ENCODE measurements at regions of chr17 and their contacts with region 1.

Region 1: GRCh38 chr17:10631048-10631700 is 25.9 kb downstream of the MYH3 start:
- DNase-seq: no peak
- H3K4me3 ChIP-seq: no peak overlapping the region
- CTCF ChIP-seq: peak; percentile 82

Region 2: GRCh38 chr17:10295728-10296343 is 335.3 kb before region 1 on chr17:
- CTCF ChIA-PET with region 1: interaction called, 14 read pairs
- POLR2A ChIA-PET with region 1: no interaction called
- DNase-seq: no peak
- H3K4me3 ChIP-seq: no peak overlapping the region
- CTCF ChIP-seq: peak; percentile 74

Region 3: GRCh38 chr17:10439816-10440215 is 191.4 kb before region 1 on chr17:
- CTCF ChIA-PET with region 1: no interaction called
- POLR2A ChIA-PET with region 1: no interaction called
- DNase-seq: no peak
- H3K4me3 ChIP-seq: no peak overlapping the region
- CTCF ChIP-seq: no peak

Region 4: GRCh38 chr17:10683853-10684252 is 52.7 kb after region 1 on chr17:
- CTCF ChIA-PET with region 1: interaction called, 20 read pairs
- POLR2A ChIA-PET with region 1: no interaction called
- DNase-seq: no peak
- H3K4me3 ChIP-seq: no peak overlapping the region
- CTCF ChIP-seq: peak; percentile 27

Region 5: GRCh38 chr17:10697092-10698081 is 66.2 kb after region 1 on chr17 and contains the starts of genes ADPRM and SCO1:
- CTCF ChIA-PET with region 1: interaction called, 15 read pairs
- POLR2A ChIA-PET with region 1: no interaction called
- DNase-seq: peak; percentile 60
- H3K4me3 ChIP-seq: peak within 1 kb of the TSS; percentile 97
- CTCF ChIP-seq: peak; percentile 72

Region 6: DNA sequence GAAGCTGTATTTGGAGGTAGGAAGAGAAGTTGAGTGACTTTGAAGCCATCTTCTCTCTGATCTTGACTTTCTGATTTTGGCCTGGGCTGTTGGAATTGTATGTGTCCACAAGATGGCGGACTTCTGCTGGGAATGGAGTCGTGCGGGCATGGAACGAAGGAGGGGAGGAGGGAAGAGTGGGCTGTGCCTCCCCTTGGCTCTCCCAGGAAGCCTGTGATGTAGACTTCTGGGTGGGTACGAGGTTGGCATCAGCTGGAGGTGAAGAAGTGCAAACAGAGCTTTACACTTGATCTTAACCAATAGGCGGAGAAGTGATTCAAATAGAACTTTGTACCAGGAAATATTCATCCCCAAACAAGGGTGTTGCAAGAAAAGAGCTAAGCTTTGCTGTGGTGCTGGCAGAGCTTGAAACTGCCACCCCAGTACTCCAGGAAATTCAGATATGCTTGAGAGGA is 106.0 kb after region 1 on chr17:
- CTCF ChIA-PET with region 1: interaction called, 18 read pairs
- POLR2A ChIA-PET with region 1: no interaction called
- DNase-seq: no peak
- H3K4me3 ChIP-seq: no peak overlapping the region
- CTCF ChIP-seq: peak; percentile 77

Region 7: DNA sequence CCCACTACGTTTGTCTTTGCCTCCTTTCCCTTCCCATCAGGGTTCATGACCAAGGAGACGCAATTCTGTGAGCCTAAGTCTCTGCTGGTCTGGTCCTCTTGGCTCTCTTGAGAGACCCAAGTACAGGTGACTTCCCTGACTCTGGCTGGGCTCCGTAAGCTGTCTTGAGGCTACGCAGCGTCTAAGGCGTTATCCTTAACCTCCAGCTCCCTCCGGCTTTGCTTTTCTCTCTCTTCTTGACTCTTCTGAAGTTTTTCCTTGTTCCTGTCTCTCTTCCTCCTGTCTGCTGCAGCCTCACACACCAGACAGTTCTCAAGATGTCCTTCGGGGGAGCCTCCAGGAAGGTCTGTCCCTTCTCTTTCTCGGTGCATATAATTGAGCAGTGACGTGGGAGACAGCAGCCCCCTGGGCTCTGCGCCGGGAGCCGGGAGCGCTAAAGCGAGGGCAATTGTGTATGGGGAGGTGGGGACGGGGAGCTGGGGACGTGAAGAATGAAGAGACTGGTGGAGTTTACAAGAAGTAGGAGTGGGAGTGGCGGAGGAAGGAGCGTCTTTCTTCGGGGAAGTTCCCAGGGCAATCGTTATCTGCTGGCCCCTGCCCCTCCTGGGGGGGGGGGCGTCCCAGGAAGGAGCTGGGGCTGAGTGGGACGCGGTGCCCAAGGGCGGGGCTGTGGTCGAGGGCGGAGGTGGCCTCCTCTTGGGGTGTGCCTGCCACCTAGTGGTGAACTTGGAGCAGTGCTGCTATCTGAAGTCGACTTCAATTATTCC is 213.6 kb after region 1 on chr17:
- CTCF ChIA-PET with region 1: interaction called, 56 read pairs
- POLR2A ChIA-PET with region 1: no interaction called
- DNase-seq: peak; percentile 7
- H3K4me3 ChIP-seq: peak overlapping the region; percentile 54
- CTCF ChIP-seq: peak; percentile 89

Region 8: GRCh38 chr17:10920558-10921108 is 289.5 kb after region 1 on chr17:
- CTCF ChIA-PET with region 1: no interaction called
- POLR2A ChIA-PET with region 1: no interaction called
- DNase-seq: no peak
- H3K4me3 ChIP-seq: no peak overlapping the region
- CTCF ChIP-seq: no peak